ENCODE measurements at regions of chr4 and their contacts with region 1.

Region 1: DNA sequence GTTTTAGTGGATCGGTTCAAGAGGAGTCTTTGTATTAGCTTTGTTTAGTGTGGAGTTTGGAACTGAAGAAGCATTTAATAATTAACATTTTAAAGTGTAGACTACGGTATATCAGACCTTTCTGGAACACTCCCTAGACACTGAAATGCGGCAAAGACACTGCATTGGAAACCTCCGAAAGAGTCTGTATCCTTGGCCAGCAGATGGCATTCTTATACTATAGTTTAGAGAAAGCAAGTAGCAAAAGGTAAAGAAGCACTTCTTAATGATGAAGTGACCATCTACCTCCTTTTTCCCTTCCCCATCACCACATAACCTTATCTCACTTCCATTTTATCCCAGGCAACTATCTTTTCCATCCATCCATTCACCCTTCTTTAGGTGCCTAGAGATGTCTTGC is 7.6 kb downstream of the FABP2 start:
- DNase-seq: peak in 1 of 2 donors; percentile 29
- ATAC-seq: peak in 7 of 8 donors; percentile 62 to 80 (median 76)
- H3K4me3 ChIP-seq: no peak overlapping the region
- H3K27ac ChIP-seq: no peak overlapping the region
- H3K4me1 ChIP-seq: peaks cover 0 to 5% (median 0%) of the 10 kb centered on the region in 9 donors
- H3K27me3 ChIP-seq: no peaks in the 10 kb centered on the region
- CTCF ChIP-seq: peak in 8 of 9 donors; percentile 34 to 78 (median 63)

Region 2: GRCh38 chr4:118099106-118099505 is 1215.2 kb before region 1 on chr4:
- intact Hi-C with region 1: no loop called
- DNase-seq: no peak
- ATAC-seq: no peak
- H3K4me3 ChIP-seq: no peak overlapping the region
- H3K27ac ChIP-seq: no peak overlapping the region
- H3K4me1 ChIP-seq: no peaks in the 10 kb centered on the region
- H3K27me3 ChIP-seq: no peaks in the 10 kb centered on the region
- CTCF ChIP-seq: no peak

Region 3: DNA sequence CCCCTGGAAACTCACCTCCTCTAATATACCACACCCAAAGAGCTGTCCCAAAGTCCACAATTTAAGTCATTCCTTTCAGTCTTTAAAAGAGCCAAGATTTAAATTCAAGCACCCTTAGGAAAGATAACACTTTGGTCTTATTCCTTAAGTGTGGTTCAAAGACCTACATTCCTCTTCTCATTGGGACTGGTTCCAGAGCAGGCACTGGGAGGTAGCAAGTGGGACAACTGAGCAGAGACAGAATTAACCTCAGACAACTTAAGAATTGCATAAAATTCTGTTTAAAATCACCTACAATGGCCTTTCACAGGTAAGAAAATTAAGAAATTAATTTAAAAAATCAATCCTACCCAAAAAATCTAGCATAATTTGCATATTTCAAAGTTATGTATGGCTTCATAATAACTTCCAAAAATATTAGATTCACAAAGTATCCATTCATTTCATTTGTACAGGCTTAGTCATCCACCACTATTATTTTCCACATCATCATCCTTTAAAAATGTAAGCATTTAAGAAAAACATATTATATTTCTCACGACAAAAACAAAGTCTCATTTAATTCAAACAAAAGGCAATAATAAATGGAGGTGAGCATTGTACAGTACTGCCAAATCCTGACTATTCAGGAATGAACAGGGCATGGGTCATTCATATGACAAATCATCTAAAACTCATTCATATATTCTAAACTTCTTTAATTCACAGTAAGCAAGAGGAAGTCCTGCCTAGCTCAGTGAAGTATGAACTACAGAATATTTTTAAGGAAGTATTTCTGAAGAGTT is 975.2 kb before region 1 on chr4:
- intact Hi-C with region 1: no loop called
- DNase-seq: no peak
- ATAC-seq: no peak
- H3K4me3 ChIP-seq: no peak overlapping the region
- H3K27ac ChIP-seq: no peak overlapping the region
- H3K4me1 ChIP-seq: no peaks in the 10 kb centered on the region
- H3K27me3 ChIP-seq: peaks cover 0 to 7% (median 0%) of the 10 kb centered on the region in 7 donors
- CTCF ChIP-seq: no peak

Region 4: GRCh38 chr4:119471259-119471658 is 156.9 kb after region 1 on chr4:
- intact Hi-C with region 1: loop called in 1 of 10 experiments (anchors 10 kb)
- DNase-seq: no peak
- ATAC-seq: no peak
- H3K4me3 ChIP-seq: no peak overlapping the region
- H3K27ac ChIP-seq: no peak overlapping the region
- H3K4me1 ChIP-seq: peaks cover 0 to 8% (median 0%) of the 10 kb centered on the region in 9 donors
- H3K27me3 ChIP-seq: no peaks in the 10 kb centered on the region
- CTCF ChIP-seq: no peak

Region 5: DNA sequence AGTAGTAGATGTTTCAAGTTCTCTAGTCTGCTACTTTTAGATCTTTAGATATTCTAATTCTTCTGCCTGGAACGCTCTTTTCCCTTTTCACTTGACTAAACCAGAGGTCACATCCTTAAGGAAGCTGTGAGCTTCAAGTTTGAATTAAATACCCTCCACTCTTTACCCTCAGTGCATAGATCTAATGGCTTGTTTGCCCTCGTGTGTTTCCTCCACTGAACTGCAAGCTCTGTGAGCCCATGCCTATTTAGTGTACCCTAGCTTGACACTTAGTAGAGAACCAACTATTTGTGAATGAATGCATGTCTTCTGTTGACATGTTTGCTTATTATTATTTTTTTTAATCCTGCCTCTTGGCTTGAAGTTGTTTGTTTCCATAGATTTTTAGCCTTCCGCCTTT is 176.0 kb after region 1 on chr4:
- intact Hi-C with region 1: loop called in 4 of 10 experiments (anchors 5 to 10 kb)
- DNase-seq: no peak
- ATAC-seq: peak in 1 of 8 donors; percentile 51
- H3K4me3 ChIP-seq: no peak overlapping the region
- H3K27ac ChIP-seq: no peak overlapping the region
- H3K4me1 ChIP-seq: no peaks in the 10 kb centered on the region
- H3K27me3 ChIP-seq: no peaks in the 10 kb centered on the region
- CTCF ChIP-seq: peak in 6 of 9 donors; percentile 9 to 40 (median 22)

Region 6: DNA sequence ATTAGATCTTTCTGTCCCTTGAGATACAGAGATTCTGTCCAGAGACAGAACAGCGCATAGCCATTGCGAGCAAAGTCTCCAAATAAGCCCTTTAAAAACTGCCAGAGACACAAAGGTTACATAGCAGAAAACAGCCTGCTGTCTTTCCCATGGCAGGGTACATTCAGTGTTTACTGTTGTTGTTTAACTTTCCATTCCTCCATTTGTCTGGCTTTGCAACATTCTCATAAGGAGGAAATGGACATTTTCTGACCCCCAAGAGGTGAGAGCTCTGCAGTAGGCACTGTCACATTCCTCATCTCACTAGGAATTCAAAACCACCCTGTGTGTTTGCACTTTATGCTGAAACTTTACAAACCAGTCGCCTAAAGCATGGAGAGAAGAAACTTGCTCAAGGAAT is 265.9 kb after region 1 on chr4:
- intact Hi-C with region 1: no loop called
- DNase-seq: no peak
- ATAC-seq: peak in 3 of 8 donors; percentile 20 to 47 (median 37)
- H3K4me3 ChIP-seq: no peak overlapping the region
- H3K27ac ChIP-seq: peak overlapping the region in 2 of 10 donors; percentile 5 to 35
- H3K4me1 ChIP-seq: peaks cover 0 to 7% (median 0%) of the 10 kb centered on the region in 9 donors
- H3K27me3 ChIP-seq: no peaks in the 10 kb centered on the region
- CTCF ChIP-seq: no peak

Region 7: DNA sequence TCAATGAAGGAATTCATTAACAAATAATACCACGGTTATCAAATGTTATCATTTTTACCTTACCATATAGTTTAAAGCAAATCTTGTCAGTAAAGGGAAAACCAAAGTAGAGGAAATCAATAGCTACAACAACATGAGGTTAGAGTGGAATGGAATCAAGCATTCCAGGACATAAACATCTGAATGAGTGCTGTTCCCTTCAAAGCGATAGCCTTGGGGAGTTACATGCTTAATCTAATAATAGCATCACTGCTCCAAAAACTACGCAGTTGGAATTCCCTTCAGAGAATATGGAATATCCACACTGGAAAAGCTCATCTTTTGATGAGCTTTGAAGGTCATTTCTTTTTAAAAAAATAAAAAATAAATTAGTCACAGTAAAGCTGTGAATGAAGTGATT is 283.0 kb after region 1 on chr4:
- intact Hi-C with region 1: no loop called
- DNase-seq: no peak
- ATAC-seq: peak in 3 of 8 donors; percentile 55 to 74 (median 67)
- H3K4me3 ChIP-seq: no peak overlapping the region
- H3K27ac ChIP-seq: peak overlapping the region in 2 of 10 donors; percentile 15 to 23
- H3K4me1 ChIP-seq: peaks cover 0 to 21% (median 0%) of the 10 kb centered on the region in 9 donors
- H3K27me3 ChIP-seq: no peaks in the 10 kb centered on the region
- CTCF ChIP-seq: no peak

Measured in heart right ventricle (tissue), 16 donors.